GM12878 (cell line): ENCODE measurements at regions of chr7 and their contacts with region 1.

Region 1: GRCh38 chr7:110442381-110442837 is 648.5 kb upstream of the LRRN3 start:
- DNase-seq: no peak
- ATAC-seq: peak; percentile 93
- H3K4me3 ChIP-seq: no peak overlapping the region
- H3K27ac ChIP-seq: no peak overlapping the region
- H3K4me1 ChIP-seq: no peaks in the 10 kb centered on the region
- H3K27me3 ChIP-seq: no peaks in the 10 kb centered on the region
- CTCF ChIP-seq: peak; percentile 40 to 49 (median 40); a peak in 5 of 6 replicates
- EP300 ChIP-seq: no peak
- POLR2A ChIP-seq: no peak
- RAD21 ChIP-seq: peak; percentile 69

Region 2: DNA sequence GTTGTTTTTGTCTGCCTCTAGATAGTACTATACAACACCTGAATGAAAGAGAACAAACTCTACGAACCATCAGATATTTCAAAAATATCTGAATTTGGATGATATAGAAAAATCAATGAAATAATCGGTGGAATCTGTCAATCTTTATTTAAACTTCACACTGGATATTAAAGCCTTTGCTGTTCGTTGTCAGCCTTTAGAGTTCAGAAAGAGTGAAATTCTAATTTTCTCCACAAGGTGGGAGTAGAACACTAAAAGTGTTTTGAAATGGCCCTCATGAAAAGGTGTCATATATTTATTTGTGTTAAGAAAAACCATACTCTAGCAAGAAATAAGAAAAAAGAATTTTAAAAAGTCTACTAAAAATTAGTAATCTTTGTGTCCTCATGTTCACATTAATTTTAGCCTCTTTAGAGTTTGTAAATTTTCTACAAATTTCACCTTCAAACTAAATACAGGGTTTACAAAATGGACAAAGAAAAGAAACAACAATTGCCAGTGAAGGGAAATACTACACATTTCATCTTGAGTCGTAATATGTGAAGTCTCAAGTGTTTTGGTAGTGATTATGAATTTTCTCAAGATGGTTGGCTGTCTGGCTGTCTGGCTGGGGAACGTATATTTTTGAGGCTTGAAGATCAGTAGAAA is 1829.2 kb before region 1 on chr7:
- CTCF ChIA-PET with region 1: no interaction called
- POLR2A ChIA-PET with region 1: no interaction called
- RAD21 ChIA-PET with region 1: no interaction called
- SMC1A ChIA-PET with region 1: no interaction called
- in situ Hi-C with region 1: no loop called
- intact Hi-C with region 1: loop called (anchors 10 kb)
- DNase-seq: no peak
- ATAC-seq: peak; percentile 83
- H3K4me3 ChIP-seq: no peak overlapping the region
- H3K27ac ChIP-seq: no peak overlapping the region
- H3K4me1 ChIP-seq: no peaks in the 10 kb centered on the region
- H3K27me3 ChIP-seq: peaks cover 0 to 4% of the 10 kb centered on the region in 2 experiments; a peak in 1 of 4 replicates
- CTCF ChIP-seq: peak; percentile 46 to 71 (median 50); a peak in 5 of 6 replicates
- EP300 ChIP-seq: no peak
- POLR2A ChIP-seq: no peak
- RAD21 ChIP-seq: peak; percentile 78

Region 3: GRCh38 chr7:109844362-109844761 is 598.0 kb before region 1 on chr7:
- CTCF ChIA-PET with region 1: interaction called, 4 read pairs
- POLR2A ChIA-PET with region 1: no interaction called
- RAD21 ChIA-PET with region 1: no interaction called
- SMC1A ChIA-PET with region 1: interaction called, 11 read pairs
- in situ Hi-C with region 1: no loop called
- intact Hi-C with region 1: loop called (anchors 5 kb)
- DNase-seq: no peak
- ATAC-seq: no peak
- H3K4me3 ChIP-seq: no peak overlapping the region
- H3K27ac ChIP-seq: no peak overlapping the region
- H3K4me1 ChIP-seq: no peaks in the 10 kb centered on the region
- H3K27me3 ChIP-seq: no peaks in the 10 kb centered on the region
- CTCF ChIP-seq: peak; percentile 20 to 41 (median 27); a peak in 4 of 6 replicates
- EP300 ChIP-seq: no peak
- POLR2A ChIP-seq: no peak
- RAD21 ChIP-seq: peak; percentile 72

Region 4: DNA sequence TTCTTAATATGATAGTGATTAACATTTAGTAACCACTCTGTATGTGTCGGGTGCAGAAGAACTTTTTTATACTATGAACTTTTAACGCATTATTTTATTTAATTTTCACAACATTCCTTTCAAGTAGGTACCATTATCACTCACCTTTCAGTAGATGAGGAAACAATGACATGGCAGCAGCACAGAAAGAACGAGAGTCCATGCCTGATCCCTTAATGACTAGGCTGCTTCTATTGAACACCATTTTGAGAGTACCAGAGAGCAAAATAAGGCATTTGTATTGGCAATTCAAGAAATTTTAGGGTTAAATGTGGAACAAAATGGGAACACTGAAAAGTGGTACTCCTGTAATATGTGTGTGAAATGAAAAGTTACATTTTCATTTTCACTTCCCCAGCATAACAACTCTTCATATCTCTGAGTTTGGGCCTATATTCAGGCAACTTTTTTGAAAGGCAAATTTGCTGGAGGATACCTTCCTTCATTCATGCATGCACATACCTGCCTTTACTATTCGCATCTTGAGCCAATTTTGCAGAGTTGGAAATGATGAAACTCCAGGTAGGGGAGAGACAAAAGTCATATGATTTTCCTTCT is 661.4 kb after region 1 on chr7:
- CTCF ChIA-PET with region 1: no interaction called
- POLR2A ChIA-PET with region 1: no interaction called
- RAD21 ChIA-PET with region 1: no interaction called
- SMC1A ChIA-PET with region 1: interaction called, 3 read pairs
- in situ Hi-C with region 1: no loop called
- intact Hi-C with region 1: loop called (anchors 10 kb)
- DNase-seq: no peak
- ATAC-seq: peak; percentile 77
- H3K4me3 ChIP-seq: no peak overlapping the region
- H3K27ac ChIP-seq: peak overlapping the region; percentile 24; the same call in 1 of the 2 replicates
- H3K4me1 ChIP-seq: peaks cover 11% of the 10 kb centered on the region
- H3K27me3 ChIP-seq: no peaks in the 10 kb centered on the region
- CTCF ChIP-seq: no peak
- EP300 ChIP-seq: 0 out of 4 replicates have a peak, but pooled peaks of 1 of the 2 experiments have one; percentile 19
- POLR2A ChIP-seq: no peak
- RAD21 ChIP-seq: no peak